CD4-positive, alpha-beta T cell (primary cell): ENCODE measurements at regions of chr7 and their contacts with region 1.

Region 1: GRCh38 chr7:130912862-130913631 is 179.0 kb upstream of the KLF14 start:
- DNase-seq: peak; percentile 56 to 96 (median 72)
- ATAC-seq: peak; percentile 90
- H3K4me3 ChIP-seq: peak overlapping the region; percentile 61
- H3K4me3 Mint-ChIP-seq: peak overlapping the region; percentile 92
- H3K27ac ChIP-seq: peak overlapping the region; percentile 85 to 92
- H3K27ac Mint-ChIP-seq: peak overlapping the region; percentile 92
- H3K4me1 ChIP-seq: peaks cover 66% of the 10 kb centered on the region
- H3K4me1 Mint-ChIP-seq: peaks cover 93% of the 10 kb centered on the region
- H3K27me3 ChIP-seq: no peaks in the 10 kb centered on the region
- H3K27me3 Mint-ChIP-seq: no peaks in the 10 kb centered on the region
- CTCF ChIP-seq: no peak

Region 2: GRCh38 chr7:130941322-130942210 is 28.5 kb after region 1 on chr7:
- CTCF ChIA-PET with region 1: interaction called, 4 read pairs
- POLR2A ChIA-PET with region 1: interaction called, 23 read pairs
- intact Hi-C with region 1: loop called in 1 of 2 experiments (anchors 2 kb)
- DNase-seq: peak in 6 of 14 experiments; percentile 29 to 78 (median 58)
- ATAC-seq: no peak
- H3K4me3 ChIP-seq: peak overlapping the region; percentile 64
- H3K4me3 Mint-ChIP-seq: peak overlapping the region; percentile 88
- H3K27ac ChIP-seq: peak overlapping the region; percentile 25 to 86
- H3K27ac Mint-ChIP-seq: peak overlapping the region; percentile 98
- H3K4me1 ChIP-seq: peaks cover 47% of the 10 kb centered on the region
- H3K4me1 Mint-ChIP-seq: peaks cover 96% of the 10 kb centered on the region
- H3K27me3 ChIP-seq: no peaks in the 10 kb centered on the region
- H3K27me3 Mint-ChIP-seq: no peaks in the 10 kb centered on the region
- CTCF ChIP-seq: no peak

Region 3: GRCh38 chr7:130947792-130948580 is 34.9 kb after region 1 on chr7:
- CTCF ChIA-PET with region 1: no interaction called
- POLR2A ChIA-PET with region 1: interaction called, 23 read pairs
- intact Hi-C with region 1: loop called in 1 of 2 experiments (anchors 2 kb)
- DNase-seq: peak in 3 of 14 experiments; percentile 62 to 84 (median 64)
- ATAC-seq: peak; percentile 16
- H3K4me3 ChIP-seq: peak overlapping the region; percentile 19
- H3K4me3 Mint-ChIP-seq: peak overlapping the region; percentile 74
- H3K27ac ChIP-seq: peak overlapping the region in 1 of 2 donors; percentile 68
- H3K27ac Mint-ChIP-seq: peak overlapping the region; percentile 98
- H3K4me1 ChIP-seq: peaks cover 59% of the 10 kb centered on the region
- H3K4me1 Mint-ChIP-seq: peaks cover 54% of the 10 kb centered on the region
- H3K27me3 ChIP-seq: no peaks in the 10 kb centered on the region
- H3K27me3 Mint-ChIP-seq: no peaks in the 10 kb centered on the region
- CTCF ChIP-seq: no peak

Region 4: DNA sequence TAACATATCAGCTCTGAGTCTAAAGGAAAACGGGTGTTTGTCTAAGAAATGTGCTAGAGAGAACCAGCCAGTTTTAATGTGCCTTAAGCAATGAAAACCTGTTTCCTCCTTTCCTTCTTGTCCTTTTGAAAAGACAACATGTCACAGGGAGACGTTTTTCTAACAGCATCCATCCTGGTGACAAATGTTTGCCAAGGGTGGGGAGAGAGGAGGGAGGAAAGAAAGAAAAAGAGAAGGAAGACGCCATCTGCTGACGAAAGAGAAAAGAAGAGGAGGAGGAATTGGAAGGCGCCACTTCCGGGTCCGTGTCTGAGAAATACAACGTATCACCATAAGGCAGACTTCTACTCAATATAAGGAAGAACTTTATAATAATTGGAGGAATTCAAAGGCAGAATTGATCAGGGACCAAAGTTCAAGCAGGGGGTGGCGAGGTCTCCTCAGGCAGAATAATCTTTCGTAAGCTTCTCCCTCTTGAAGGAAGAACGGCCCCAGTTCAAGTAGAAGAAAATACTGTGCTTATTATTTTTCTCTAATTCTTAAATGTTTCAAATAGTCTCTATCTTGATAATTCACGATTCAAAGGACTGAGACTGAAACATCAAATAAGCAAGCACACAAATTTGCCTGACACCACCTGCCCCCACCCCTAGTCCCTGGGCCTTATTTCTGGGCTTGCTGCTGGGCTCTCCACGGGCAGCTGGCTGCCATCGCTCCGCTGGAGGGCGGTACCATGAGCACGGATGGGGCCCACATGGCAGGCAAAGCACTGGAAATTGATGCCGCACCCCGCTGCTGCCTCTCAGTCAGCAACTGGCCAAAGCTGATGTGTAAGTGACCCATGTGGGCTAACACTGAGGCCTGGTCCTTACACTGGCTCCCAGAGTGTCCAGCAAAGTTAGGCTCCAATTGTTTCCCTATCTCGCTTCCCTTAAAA is 94.6 kb after region 1 on chr7:
- CTCF ChIA-PET with region 1: no interaction called
- POLR2A ChIA-PET with region 1: interaction called, 4 read pairs
- intact Hi-C with region 1: loop called in 1 of 2 experiments (anchors 2 kb)
- DNase-seq: peak in 11 of 14 experiments; percentile 27 to 83 (median 48)
- ATAC-seq: peak; percentile 60
- H3K4me3 ChIP-seq: no peak overlapping the region
- H3K4me3 Mint-ChIP-seq: peak overlapping the region; percentile 40
- H3K27ac ChIP-seq: peak overlapping the region; percentile 36 to 71
- H3K27ac Mint-ChIP-seq: peak overlapping the region; percentile 76
- H3K4me1 ChIP-seq: peaks cover 61% of the 10 kb centered on the region
- H3K4me1 Mint-ChIP-seq: peaks cover 93% of the 10 kb centered on the region
- H3K27me3 ChIP-seq: no peaks in the 10 kb centered on the region
- H3K27me3 Mint-ChIP-seq: no peaks in the 10 kb centered on the region
- CTCF ChIP-seq: peak; percentile 77

Region 5: DNA sequence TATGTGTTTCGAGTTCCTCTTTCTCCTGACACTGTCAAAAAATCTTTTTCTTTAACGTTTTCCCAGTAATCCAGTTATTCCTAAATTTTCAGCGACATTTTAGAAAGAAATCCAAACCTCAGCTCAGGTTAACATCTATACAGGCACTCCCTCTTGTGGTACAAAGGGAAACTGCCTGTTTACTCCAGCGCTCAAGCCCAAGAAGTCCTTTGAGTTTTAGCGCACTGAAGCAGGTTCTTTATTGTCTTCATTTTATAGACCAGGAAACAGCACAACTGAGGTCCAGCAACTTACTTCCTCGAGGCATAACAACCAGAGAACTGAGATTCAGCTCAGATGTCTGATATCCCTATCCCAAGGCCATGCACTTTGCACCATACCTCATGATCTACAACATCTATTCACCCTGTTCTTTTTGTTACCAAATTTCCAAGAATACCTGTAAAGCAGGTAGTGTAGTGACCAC is 127.5 kb after region 1 on chr7:
- CTCF ChIA-PET with region 1: no interaction called
- POLR2A ChIA-PET with region 1: interaction called, 5 read pairs
- intact Hi-C with region 1: loop called in 1 of 2 experiments (anchors 5 kb)
- DNase-seq: peak in 6 of 14 experiments; percentile 31 to 81 (median 65)
- ATAC-seq: peak; percentile 58
- H3K4me3 ChIP-seq: no peak overlapping the region
- H3K4me3 Mint-ChIP-seq: peak overlapping the region; percentile 47
- H3K27ac ChIP-seq: no peak overlapping the region
- H3K27ac Mint-ChIP-seq: peak overlapping the region; percentile 72
- H3K4me1 ChIP-seq: peaks cover 23% of the 10 kb centered on the region
- H3K4me1 Mint-ChIP-seq: peaks cover 80% of the 10 kb centered on the region
- H3K27me3 ChIP-seq: no peaks in the 10 kb centered on the region
- H3K27me3 Mint-ChIP-seq: no peaks in the 10 kb centered on the region
- CTCF ChIP-seq: peak; percentile 95